ENCODE measurements at regions of chr1 and their contacts with region 1.

Region 1: GRCh38 chr1:228139944-228140656 is at the start of gene GUK1:
- DNase-seq: peak; percentile 100
- ATAC-seq: peak; percentile 91
- H3K4me3 ChIP-seq: peak within 1 kb of the TSS; percentile 70 to 87 (median 82)
- H3K4me3 Mint-ChIP-seq: peak within 1 kb of the TSS; percentile 96
- H3K27ac ChIP-seq: peak within 1 kb of the TSS; percentile 95 to 98
- H3K27ac Mint-ChIP-seq: peak within 1 kb of the TSS; percentile 100
- H3K4me1 ChIP-seq: peaks cover 55 to 74% of the 10 kb centered on the region in 2 donors
- H3K4me1 Mint-ChIP-seq: peaks cover 68% of the 10 kb centered on the region
- H3K27me3 ChIP-seq: no peaks in the 10 kb centered on the region
- H3K27me3 Mint-ChIP-seq: no peaks in the 10 kb centered on the region
- CTCF ChIP-seq: no peak
- total RNA-seq, gene GUK1: 123 and 125 TPM in 2 replicates

Region 2: DNA sequence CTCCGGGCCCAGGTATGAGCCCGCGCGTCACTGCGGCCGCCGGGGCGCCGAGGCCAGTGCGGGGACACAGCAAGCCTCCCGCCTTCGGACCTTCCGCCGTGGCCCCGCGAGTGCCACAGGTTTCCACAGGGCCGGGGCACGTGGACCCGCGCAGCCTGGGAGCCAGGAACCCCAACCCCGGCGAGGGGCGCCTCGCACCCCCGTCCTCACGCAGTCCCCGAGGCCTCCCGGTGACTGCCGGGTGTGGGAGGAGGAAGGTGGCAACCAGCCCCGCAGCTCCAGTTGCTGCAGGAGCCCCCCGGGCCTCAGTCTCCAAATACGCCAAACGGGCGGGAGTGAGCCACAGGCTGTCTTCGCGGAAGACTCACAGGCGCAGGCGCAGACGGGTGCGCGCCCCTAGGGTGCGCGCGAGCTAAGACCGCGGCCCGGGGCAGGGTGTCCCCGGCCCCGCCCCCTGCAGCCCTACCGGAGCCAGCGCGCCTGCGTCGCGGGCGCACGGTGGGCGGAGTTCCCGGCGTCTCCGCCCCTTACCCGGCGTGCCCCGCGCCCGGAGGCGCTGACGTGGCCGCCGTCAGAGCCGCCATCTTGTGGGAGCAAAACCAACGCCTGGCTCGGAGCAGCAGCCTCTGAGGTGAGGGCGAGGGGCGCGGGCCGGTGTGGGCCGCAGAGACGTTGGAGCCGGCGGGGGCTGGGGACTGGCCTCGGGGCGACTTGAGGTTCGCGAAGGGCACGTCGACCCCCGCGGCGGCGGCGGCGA is 57.8 kb before region 1 on chr1 and contains the start of gene ARF1:
- CTCF ChIA-PET with region 1: interaction called, 3 read pairs
- POLR2A ChIA-PET with region 1: interaction called, 3 read pairs
- intact Hi-C with region 1: loop called (anchors 1 kb)
- DNase-seq: peak; percentile 96
- ATAC-seq: peak; percentile 92
- H3K4me3 ChIP-seq: peak within 1 kb of the TSS; percentile 78 to 97 (median 91)
- H3K4me3 Mint-ChIP-seq: peak within 1 kb of the TSS; percentile 94
- H3K27ac ChIP-seq: peak within 1 kb of the TSS; percentile 78 to 96
- H3K27ac Mint-ChIP-seq: peak within 1 kb of the TSS; percentile 93
- H3K4me1 ChIP-seq: peaks cover 44 to 50% of the 10 kb centered on the region in 2 donors
- H3K4me1 Mint-ChIP-seq: peaks cover 46% of the 10 kb centered on the region
- H3K27me3 ChIP-seq: no peaks in the 10 kb centered on the region
- H3K27me3 Mint-ChIP-seq: no peaks in the 10 kb centered on the region
- CTCF ChIP-seq: no peak
- total RNA-seq, gene ARF1: 193 and 195 TPM in 2 replicates

Region 3: DNA sequence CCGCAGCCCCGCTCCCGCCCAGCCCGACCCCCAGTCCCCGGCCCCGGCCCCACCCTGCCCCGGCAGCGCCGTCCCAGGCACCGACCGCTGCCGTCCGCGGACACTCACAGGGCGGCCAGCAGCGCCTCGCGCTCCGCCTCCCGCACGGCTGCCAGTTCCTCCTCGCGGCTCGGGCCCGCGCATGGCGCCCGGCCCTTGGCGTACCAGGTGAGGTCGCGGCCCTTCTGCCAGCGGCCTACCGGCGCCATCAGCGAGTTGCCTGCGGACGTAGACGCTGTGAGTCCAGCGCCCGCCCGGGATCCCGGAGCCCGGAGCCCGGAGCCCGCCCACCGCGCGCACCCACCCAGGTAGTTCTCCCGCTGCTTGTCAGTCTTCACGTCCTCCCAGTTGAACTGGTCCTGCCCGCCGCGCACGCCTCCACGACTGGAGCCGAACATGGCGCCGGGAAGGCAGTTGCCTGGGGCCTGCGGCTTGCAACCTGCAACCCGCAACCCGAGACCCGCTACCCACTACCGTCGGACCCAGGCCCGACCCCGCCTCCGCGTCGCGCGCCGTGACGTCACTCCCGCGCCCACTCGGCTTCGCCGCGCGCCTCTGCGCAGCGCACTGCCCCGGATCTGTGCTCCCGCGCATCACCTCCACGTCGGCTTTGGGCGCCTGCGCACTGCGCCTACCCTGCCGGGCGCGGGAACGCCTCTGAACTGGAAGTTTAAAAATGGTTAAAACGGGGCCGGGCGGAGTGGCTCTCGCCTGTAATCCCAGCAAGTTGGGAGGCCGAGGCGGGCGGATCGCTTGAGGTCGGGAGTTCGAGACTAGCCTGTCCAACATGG is 37.1 kb before region 1 on chr1 and contains the start of gene C1orf35:
- CTCF ChIA-PET with region 1: interaction called, 3 read pairs
- POLR2A ChIA-PET with region 1: interaction called, 3 read pairs
- intact Hi-C with region 1: loop called (anchors 1 kb)
- DNase-seq: peak; percentile 94
- ATAC-seq: peak; percentile 83
- H3K4me3 ChIP-seq: peak within 1 kb of the TSS; percentile 48 to 98 (median 89)
- H3K4me3 Mint-ChIP-seq: peak within 1 kb of the TSS; percentile 99
- H3K27ac ChIP-seq: peak within 1 kb of the TSS; percentile 82
- H3K27ac Mint-ChIP-seq: peak within 1 kb of the TSS; percentile 98
- H3K4me1 ChIP-seq: peaks cover 18 to 28% of the 10 kb centered on the region in 2 donors
- H3K4me1 Mint-ChIP-seq: peaks cover 29% of the 10 kb centered on the region
- H3K27me3 ChIP-seq: no peaks in the 10 kb centered on the region
- H3K27me3 Mint-ChIP-seq: no peaks in the 10 kb centered on the region
- CTCF ChIP-seq: no peak
- total RNA-seq, gene C1orf35: 23.9 and 24.1 TPM in 2 replicates

Region 4: GRCh38 chr1:228165372-228166169 is 25.5 kb after region 1 on chr1 and contains the start of gene IBA57:
- CTCF ChIA-PET with region 1: interaction called, 19 read pairs
- POLR2A ChIA-PET with region 1: interaction called, 22 read pairs
- intact Hi-C with region 1: loop called (anchors 1 kb)
- DNase-seq: peak; percentile 100
- ATAC-seq: peak; percentile 84
- H3K4me3 ChIP-seq: peak within 1 kb of the TSS; percentile 64 to 88 (median 74)
- H3K4me3 Mint-ChIP-seq: peak within 1 kb of the TSS; percentile 93
- H3K27ac ChIP-seq: peak within 1 kb of the TSS; percentile 95 to 98
- H3K27ac Mint-ChIP-seq: peak within 1 kb of the TSS; percentile 99
- H3K4me1 ChIP-seq: peaks cover 14 to 26% of the 10 kb centered on the region in 2 donors
- H3K4me1 Mint-ChIP-seq: peaks cover 28% of the 10 kb centered on the region
- H3K27me3 ChIP-seq: peaks cover 0 to 5% (median 0%) of the 10 kb centered on the region in 4 experiments
- H3K27me3 Mint-ChIP-seq: no peaks in the 10 kb centered on the region
- CTCF ChIP-seq: peak; percentile 73
- total RNA-seq, gene IBA57: 12.8 and 15.3 TPM in 2 replicates

Region 5: DNA sequence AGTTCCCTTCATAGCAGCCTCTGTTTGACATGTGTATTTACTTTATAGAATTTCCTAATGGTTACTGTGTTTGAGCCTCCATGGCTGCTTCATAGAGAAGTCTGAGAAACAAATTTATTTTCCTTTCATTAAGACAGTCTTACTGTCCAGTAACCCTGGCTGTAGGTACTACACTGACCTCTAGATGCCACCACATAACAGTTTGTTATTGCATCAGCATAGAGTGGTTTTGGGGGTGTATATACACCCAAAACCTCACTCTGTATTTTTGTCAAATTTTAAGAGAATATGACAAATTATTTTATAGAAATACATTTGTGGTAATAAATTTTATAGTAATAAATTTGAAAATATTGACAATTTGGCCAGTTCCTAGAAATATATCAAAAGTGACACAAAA is 125.1 kb after region 1 on chr1:
- CTCF ChIA-PET with region 1: no interaction called
- POLR2A ChIA-PET with region 1: no interaction called
- intact Hi-C with region 1: no loop called
- DNase-seq: no peak
- ATAC-seq: no peak
- H3K4me3 ChIP-seq: no peak overlapping the region
- H3K4me3 Mint-ChIP-seq: no peak overlapping the region
- H3K27ac ChIP-seq: no peak overlapping the region
- H3K27ac Mint-ChIP-seq: no peak overlapping the region
- H3K4me1 ChIP-seq: no peaks in the 10 kb centered on the region
- H3K4me1 Mint-ChIP-seq: no peaks in the 10 kb centered on the region
- H3K27me3 ChIP-seq: no peaks in the 10 kb centered on the region
- H3K27me3 Mint-ChIP-seq: no peaks in the 10 kb centered on the region
- CTCF ChIP-seq: no peak

Measured in B cell (primary cell).